ENCODE measurements at regions of chr2 and their contacts with region 1.

Region 1: GRCh38 chr2:24635181-24635580 is 144.1 kb downstream of the NCOA1 start:
- DNase-seq: no peak
- H3K4me3 ChIP-seq: no peak overlapping the region
- H3K27ac ChIP-seq: no peak overlapping the region
- H3K4me1 ChIP-seq: no peaks in the 10 kb centered on the region
- H3K27me3 ChIP-seq: no peaks in the 10 kb centered on the region
- CTCF ChIP-seq: no peak

Region 2: DNA sequence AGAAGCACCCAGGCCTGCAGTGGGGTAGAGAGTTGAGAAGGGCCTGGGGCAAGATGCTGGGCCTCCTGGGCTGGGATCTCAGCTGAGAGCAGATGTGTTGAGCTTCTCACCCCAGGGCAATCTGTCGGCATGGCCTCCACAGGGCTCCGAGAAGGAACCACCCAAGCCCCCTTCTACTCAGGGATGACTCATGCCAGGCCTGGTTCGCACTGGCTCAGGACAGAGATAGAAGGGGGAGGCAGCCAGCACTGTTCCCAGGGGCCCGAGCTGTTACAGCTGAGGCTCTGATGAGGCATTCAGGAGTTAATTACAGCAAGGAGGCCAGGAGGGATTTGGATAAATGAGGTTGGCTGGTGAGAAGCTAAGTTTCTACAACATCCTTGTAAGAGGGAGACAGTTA is 220.5 kb after region 1 on chr2:
- CTCF ChIA-PET with region 1: no interaction called
- POLR2A ChIA-PET with region 1: no interaction called
- intact Hi-C with region 1: no loop called
- DNase-seq: no peak
- H3K4me3 ChIP-seq: no peak overlapping the region
- H3K27ac ChIP-seq: no peak overlapping the region
- H3K4me1 ChIP-seq: no peaks in the 10 kb centered on the region
- H3K27me3 ChIP-seq: no peaks in the 10 kb centered on the region
- CTCF ChIP-seq: no peak

Region 3: DNA sequence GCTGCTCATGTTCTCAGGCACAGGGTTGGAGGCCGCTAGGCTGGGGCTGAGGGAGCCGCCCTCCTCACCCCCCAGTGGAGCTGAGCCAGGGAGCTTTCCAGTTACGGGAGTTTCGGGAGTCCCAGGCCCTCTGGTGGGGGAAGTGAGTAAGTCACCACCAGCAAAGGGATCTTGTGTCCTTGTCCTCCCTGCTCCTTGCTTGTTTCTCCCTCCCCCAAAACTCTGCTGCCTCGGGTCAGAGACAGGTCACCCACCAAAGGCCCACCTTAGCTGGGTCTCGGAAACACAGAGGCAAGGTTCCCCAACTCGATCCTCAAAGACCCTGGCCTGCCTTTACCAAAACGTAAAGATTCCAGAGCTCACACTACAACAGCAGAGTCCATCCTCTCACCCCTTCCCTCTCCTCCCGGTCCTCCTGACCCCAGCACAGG is 593.7 kb after region 1 on chr2:
- CTCF ChIA-PET with region 1: no interaction called
- POLR2A ChIA-PET with region 1: interaction called, 10 read pairs
- intact Hi-C with region 1: no loop called
- DNase-seq: peak; percentile 61 to 66
- H3K4me3 ChIP-seq: no peak overlapping the region
- H3K27ac ChIP-seq: no peak overlapping the region
- H3K4me1 ChIP-seq: 0 out of 2 replicates have a peak, but pooled peaks cover 6% of the 10 kb centered on the region
- H3K27me3 ChIP-seq: no peaks in the 10 kb centered on the region
- CTCF ChIP-seq: peak; percentile 86

Measured in PC-9 (cell line).